ENCODE measurements at regions of chr14 and their contacts with region 1.

Region 1: DNA sequence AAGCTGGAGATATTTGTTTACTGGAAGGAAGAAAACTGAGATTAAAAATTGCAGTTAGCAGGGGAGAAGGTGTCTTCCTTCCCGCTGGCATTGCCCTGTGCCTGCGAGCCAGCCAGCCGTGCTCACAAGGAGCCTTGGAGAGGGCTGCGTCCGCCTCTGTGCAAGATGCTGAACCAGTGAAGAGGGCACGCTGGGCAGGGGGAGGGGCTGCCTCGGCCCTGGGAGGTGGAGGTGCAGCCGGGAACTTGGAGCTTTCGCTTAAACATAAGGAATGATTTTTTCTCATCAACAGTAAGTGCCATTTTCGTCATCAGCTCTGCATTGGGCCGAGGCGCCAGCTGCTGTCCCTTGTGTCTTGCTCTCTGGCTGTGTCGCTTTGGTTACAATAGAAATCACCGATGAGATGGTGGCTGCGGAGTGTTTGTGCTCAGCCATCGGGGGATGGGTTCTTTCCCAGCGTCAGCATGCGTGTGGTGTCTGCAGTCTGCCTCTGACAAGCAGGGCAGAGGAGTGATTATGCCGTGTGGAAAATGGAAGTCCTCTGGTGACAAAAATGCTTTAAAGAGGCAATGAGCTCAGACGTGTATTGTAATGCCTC is 97.3 kb downstream of the ESR2 start:
- DNase-seq: peak; percentile 46
- ATAC-seq: peak; percentile 81
- H3K4me3 Mint-ChIP-seq: peak overlapping the region; percentile 83
- H3K27ac Mint-ChIP-seq: peak overlapping the region; percentile 87
- H3K4me1 Mint-ChIP-seq: peaks cover 59% of the 10 kb centered on the region
- H3K27me3 Mint-ChIP-seq: no peaks in the 10 kb centered on the region
- CTCF ChIP-seq: no peak

Region 2: DNA sequence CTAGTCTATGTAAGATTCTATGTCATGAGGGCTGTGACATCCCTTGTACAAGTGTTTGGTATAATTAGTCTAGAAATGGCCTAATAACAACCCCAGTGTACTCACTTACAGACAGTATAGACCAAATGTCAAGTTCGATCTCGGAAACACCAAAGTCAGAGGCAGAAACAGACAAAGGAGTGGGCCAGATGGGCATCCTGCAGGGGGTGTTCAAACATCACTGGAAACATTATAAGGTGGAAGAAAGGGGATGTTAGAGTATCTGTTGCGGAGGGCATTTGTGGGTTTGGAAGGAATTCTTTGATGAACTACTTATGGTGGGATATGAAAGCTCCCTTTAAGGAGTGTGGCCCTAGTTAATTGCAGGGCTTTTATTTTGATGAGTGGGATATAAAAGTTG is 37.3 kb before region 1 on chr14:
- CTCF ChIA-PET with region 1: no interaction called
- POLR2A ChIA-PET with region 1: no interaction called
- intact Hi-C with region 1: loop called (anchors 5 kb)
- DNase-seq: no peak
- ATAC-seq: peak; percentile 47
- H3K4me3 Mint-ChIP-seq: no peak overlapping the region
- H3K27ac Mint-ChIP-seq: no peak overlapping the region
- H3K4me1 Mint-ChIP-seq: peaks cover 6% of the 10 kb centered on the region
- H3K27me3 Mint-ChIP-seq: no peaks in the 10 kb centered on the region
- CTCF ChIP-seq: no peak

Region 3: DNA sequence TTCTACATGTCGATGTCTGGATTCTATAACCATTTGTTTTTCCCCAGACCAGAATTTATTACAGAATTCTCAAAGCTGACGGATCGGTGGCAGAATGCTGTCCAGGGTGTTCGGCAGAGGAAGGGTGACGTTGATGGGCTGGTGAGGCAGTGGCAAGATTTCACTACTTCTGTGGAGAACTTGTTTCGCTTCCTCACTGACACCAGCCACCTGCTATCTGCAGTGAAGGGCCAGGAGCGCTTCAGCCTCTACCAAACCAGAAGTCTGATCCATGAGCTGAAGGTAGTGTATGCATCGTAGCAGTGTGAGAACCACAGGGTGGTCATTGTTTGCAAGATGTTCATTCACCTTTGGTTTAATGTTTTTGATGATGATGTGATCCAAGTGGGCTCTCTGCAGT is 26.7 kb before region 1 on chr14:
- CTCF ChIA-PET with region 1: no interaction called
- POLR2A ChIA-PET with region 1: interaction called, 3 read pairs
- intact Hi-C with region 1: loop called (anchors 2 kb)
- DNase-seq: no peak
- ATAC-seq: peak; percentile 94
- H3K4me3 Mint-ChIP-seq: no peak overlapping the region
- H3K27ac Mint-ChIP-seq: peak overlapping the region; percentile 59
- H3K4me1 Mint-ChIP-seq: peaks cover 14% of the 10 kb centered on the region
- H3K27me3 Mint-ChIP-seq: no peaks in the 10 kb centered on the region
- CTCF ChIP-seq: no peak

Region 4: GRCh38 chr14:64209444-64210131 is 12.7 kb after region 1 on chr14:
- CTCF ChIA-PET with region 1: no interaction called
- POLR2A ChIA-PET with region 1: interaction called, 28 read pairs
- intact Hi-C with region 1: loop called (anchors 1 kb)
- DNase-seq: no peak
- ATAC-seq: peak; percentile 88
- H3K4me3 Mint-ChIP-seq: peak overlapping the region; percentile 65
- H3K27ac Mint-ChIP-seq: peak overlapping the region; percentile 82
- H3K4me1 Mint-ChIP-seq: peaks cover 33% of the 10 kb centered on the region
- H3K27me3 Mint-ChIP-seq: no peaks in the 10 kb centered on the region
- CTCF ChIP-seq: no peak